ENCODE measurements at regions of chr1 and their contacts with region 1.

Region 1: DNA sequence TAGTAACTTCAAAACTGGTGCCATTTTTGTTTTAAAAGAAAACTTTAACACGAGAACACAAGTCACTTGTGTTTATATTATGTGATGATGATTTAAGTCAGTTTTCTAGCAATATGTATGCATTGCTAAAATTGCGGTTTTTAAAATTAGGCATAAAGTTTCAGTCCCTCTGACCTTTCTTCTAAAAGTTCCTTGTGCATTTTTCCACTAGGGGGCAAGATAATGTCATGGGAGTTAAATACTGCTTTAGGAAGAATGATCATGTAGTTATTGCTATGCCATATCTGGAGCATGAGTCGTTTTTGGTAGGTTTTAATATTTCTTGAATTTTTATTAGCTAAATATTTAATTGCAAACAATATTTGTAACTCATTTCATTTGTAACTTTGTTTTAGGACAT is 10.7 kb downstream of the CDC7 start:
- DNase-seq: no peak
- H3K4me3 ChIP-seq: no peak overlapping the region
- CTCF ChIP-seq: peak; percentile 52

Region 2: DNA sequence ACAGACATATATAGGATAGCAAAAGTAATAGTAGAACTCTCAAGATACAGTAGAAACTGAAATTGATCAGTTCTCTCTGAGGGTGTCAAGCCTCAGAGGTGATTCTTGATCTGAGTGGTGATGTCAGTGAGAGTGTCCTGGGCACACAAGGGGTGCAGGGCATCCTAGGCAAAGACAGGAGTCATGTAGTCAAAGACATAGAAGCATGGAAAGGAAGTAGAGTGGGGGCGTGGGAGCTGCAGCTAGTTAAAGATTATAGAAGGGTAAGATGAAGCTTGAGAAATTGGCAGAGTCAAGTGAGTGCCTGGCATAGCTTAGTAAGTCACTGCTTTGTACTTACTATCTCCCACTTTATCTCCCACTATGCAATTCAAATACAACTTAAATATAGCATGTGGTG is 12.1 kb after region 1 on chr1:
- CTCF ChIA-PET with region 1: interaction called, 59 read pairs
- POLR2A ChIA-PET with region 1: no interaction called
- DNase-seq: no peak
- H3K4me3 ChIP-seq: no peak overlapping the region
- CTCF ChIP-seq: no peak

Region 3: GRCh38 chr1:91655912-91656449 is 144.6 kb after region 1 on chr1:
- CTCF ChIA-PET with region 1: no interaction called
- POLR2A ChIA-PET with region 1: no interaction called
- DNase-seq: no peak
- H3K4me3 ChIP-seq: no peak overlapping the region
- CTCF ChIP-seq: no peak

Region 4: GRCh38 chr1:91736715-91737615 is 225.6 kb after region 1 on chr1:
- CTCF ChIA-PET with region 1: interaction called, 13 read pairs
- POLR2A ChIA-PET with region 1: no interaction called
- DNase-seq: no peak
- H3K4me3 ChIP-seq: peak overlapping the region; percentile 33
- CTCF ChIP-seq: no peak

Region 5: GRCh38 chr1:91864017-91864700 is 352.8 kb after region 1 on chr1:
- CTCF ChIA-PET with region 1: interaction called, 18 read pairs
- POLR2A ChIA-PET with region 1: no interaction called
- DNase-seq: no peak
- H3K4me3 ChIP-seq: peak overlapping the region; percentile 3
- CTCF ChIP-seq: no peak

Region 6: GRCh38 chr1:91924146-91924545 is 412.8 kb after region 1 on chr1:
- CTCF ChIA-PET with region 1: interaction called, 426 read pairs
- POLR2A ChIA-PET with region 1: no interaction called
- DNase-seq: peak; percentile 26
- H3K4me3 ChIP-seq: no peak overlapping the region
- CTCF ChIP-seq: no peak

Region 7: GRCh38 chr1:91997607-91998195 is 486.3 kb after region 1 on chr1:
- CTCF ChIA-PET with region 1: interaction called, 16 read pairs
- POLR2A ChIA-PET with region 1: no interaction called
- DNase-seq: peak; percentile 5
- H3K4me3 ChIP-seq: no peak overlapping the region
- CTCF ChIP-seq: peak; percentile 45